Mammary epithelial cell (primary cell): ENCODE measurements at regions of chr10 and their contacts with region 1.

Region 1: DNA sequence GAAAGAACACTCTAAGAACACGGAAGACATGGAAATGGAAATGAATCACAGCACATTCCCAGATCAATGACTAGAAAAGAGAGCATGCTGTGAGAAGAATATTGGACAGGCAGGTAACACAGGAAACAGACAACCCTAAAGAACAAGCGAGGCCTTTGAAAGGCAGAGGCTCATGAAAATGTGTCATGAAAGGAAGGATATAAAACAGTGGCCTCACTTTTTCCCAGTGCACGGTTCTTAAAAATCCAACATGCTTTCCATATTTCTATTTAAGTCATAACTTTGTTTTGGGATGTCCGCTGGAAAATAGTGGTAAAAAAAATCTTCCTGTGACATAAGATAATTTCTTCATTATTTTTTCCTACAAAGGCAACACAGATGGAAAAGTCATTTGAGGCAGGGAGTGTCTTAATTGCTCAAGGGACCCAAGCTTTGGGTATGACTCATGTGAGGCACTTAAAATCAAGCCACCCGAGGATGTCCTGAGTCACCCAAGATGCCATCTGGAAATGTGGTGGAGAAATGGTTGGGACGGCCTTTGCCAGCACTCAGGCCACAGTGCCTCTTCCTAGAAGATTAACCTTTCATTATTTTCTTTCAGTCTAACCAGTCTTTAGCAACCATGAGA is 17.0 kb downstream of the ITIH5 start:
- DNase-seq: no peak
- H3K4me3 ChIP-seq: no peak overlapping the region
- H3K27ac ChIP-seq: no peak overlapping the region
- H3K4me1 ChIP-seq: no peaks in the 10 kb centered on the region
- H3K27me3 ChIP-seq: no peaks in the 10 kb centered on the region
- CTCF ChIP-seq: no peak

Region 2: GRCh38 chr10:7410862-7411670 is 238.7 kb before region 1 on chr10 and contains the start of gene SFMBT2:
- CTCF ChIA-PET with region 1: no interaction called
- dilution Hi-C with region 1: no loop called
- in situ Hi-C with region 1: no loop called
- intact Hi-C with region 1: no loop called
- DNase-seq: peak; percentile 64
- H3K4me3 ChIP-seq: peak within 1 kb of the TSS; percentile 53 to 71 (median 60)
- H3K27ac ChIP-seq: no peak within 1 kb of the TSS
- H3K4me1 ChIP-seq: peaks cover 29% of the 10 kb centered on the region
- H3K27me3 ChIP-seq: peaks cover 54% of the 10 kb centered on the region
- CTCF ChIP-seq: peak in 1 of 2 donors; percentile 27
- total RNA-seq, gene SFMBT2: 1.5 to 2.2 TPM

Region 3: GRCh38 chr10:7480742-7481367 is 168.9 kb before region 1 on chr10:
- CTCF ChIA-PET with region 1: no interaction called
- dilution Hi-C with region 1: no loop called
- in situ Hi-C with region 1: no loop called
- intact Hi-C with region 1: no loop called
- DNase-seq: no peak
- H3K4me3 ChIP-seq: no peak overlapping the region
- H3K27ac ChIP-seq: no peak overlapping the region
- H3K4me1 ChIP-seq: no peaks in the 10 kb centered on the region
- H3K27me3 ChIP-seq: no peaks in the 10 kb centered on the region
- CTCF ChIP-seq: no peak

Region 4: GRCh38 chr10:7610651-7611389 is 39.0 kb before region 1 on chr10:
- CTCF ChIA-PET with region 1: no interaction called
- dilution Hi-C with region 1: loop called (anchors 5 kb)
- in situ Hi-C with region 1: no loop called
- intact Hi-C with region 1: no loop called
- DNase-seq: no peak
- H3K4me3 ChIP-seq: no peak overlapping the region
- H3K27ac ChIP-seq: no peak overlapping the region
- H3K4me1 ChIP-seq: no peaks in the 10 kb centered on the region
- H3K27me3 ChIP-seq: no peaks in the 10 kb centered on the region
- CTCF ChIP-seq: no peak